GM12878 (cell line): ENCODE measurements at regions of chr3 and their contacts with region 1.

Region 1: DNA sequence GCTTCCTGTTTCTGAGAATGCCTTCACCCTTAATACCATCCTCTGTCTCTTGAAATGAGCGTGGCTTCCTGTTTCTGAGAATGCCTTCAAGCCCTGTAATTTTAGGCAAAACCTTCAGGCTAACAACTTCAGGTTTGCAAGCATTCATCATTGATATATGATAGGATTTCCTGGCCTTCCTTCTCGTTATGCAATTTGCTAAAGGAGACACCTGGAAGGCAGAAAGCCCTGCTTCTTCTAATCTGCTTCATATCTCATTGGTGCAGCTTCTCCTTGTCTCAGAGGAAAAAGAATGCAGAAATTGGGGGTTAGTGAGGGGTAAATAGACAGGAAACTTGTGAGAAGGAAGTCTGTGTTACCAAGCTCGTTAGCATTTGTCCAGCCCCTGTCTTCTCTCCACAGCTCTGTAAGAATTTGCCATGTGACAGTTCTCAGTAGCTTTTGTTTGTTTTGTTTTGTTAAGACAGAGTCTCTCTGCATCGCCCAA is 7.3 kb downstream of the ARL6IP5 start:
- DNase-seq: no peak
- ATAC-seq: peak; percentile 70
- H3K4me3 ChIP-seq: peak overlapping the region; percentile 59
- H3K27ac ChIP-seq: peak overlapping the region; percentile 39
- H3K4me1 ChIP-seq: peaks cover 54% of the 10 kb centered on the region
- H3K27me3 ChIP-seq: no peaks in the 10 kb centered on the region
- CTCF ChIP-seq: no peak
- EP300 ChIP-seq: no peak
- POLR2A ChIP-seq: no peak
- RAD21 ChIP-seq: no peak

Region 2: DNA sequence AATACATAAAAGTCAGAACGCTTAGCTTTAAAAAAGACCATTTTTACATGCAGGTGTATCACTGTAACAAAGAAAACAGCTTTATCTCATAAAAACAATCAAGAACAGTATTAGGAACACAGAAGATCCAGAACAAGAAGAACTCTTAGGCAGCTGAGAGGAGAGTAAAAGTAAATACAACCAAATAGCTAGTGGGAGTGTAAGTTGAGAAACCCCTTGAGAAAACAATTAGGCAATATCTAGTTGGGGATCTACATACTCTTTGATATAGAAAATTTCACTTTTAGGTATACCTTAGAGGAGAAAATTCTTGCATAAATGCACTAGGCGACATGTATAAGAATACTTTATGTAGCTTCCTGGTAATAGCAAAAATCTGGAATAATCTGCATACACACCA is 47.5 kb before region 1 on chr3:
- CTCF ChIA-PET with region 1: interaction called, 5 read pairs
- POLR2A ChIA-PET with region 1: interaction called, 22 read pairs
- RAD21 ChIA-PET with region 1: interaction called, 152 read pairs
- SMC1A ChIA-PET with region 1: interaction called, 234 read pairs
- in situ Hi-C with region 1: no loop called
- intact Hi-C with region 1: no loop called
- DNase-seq: no peak
- ATAC-seq: no peak
- H3K4me3 ChIP-seq: no peak overlapping the region
- H3K27ac ChIP-seq: no peak overlapping the region
- H3K4me1 ChIP-seq: no peaks in the 10 kb centered on the region
- H3K27me3 ChIP-seq: no peaks in the 10 kb centered on the region
- CTCF ChIP-seq: no peak
- EP300 ChIP-seq: no peak
- POLR2A ChIP-seq: no peak
- RAD21 ChIP-seq: no peak

Region 3: GRCh38 chr3:69058180-69058946 is 33.7 kb before region 1 on chr3:
- CTCF ChIA-PET with region 1: interaction called, 13 read pairs
- POLR2A ChIA-PET with region 1: interaction called, 30 read pairs
- RAD21 ChIA-PET with region 1: interaction called, 152 read pairs
- SMC1A ChIA-PET with region 1: interaction called, 234 read pairs
- in situ Hi-C with region 1: no loop called
- intact Hi-C with region 1: no loop called
- DNase-seq: no peak
- ATAC-seq: peak; percentile 99
- H3K4me3 ChIP-seq: peak overlapping the region; percentile 31; the same call in 1 of the 2 replicates
- H3K27ac ChIP-seq: peak overlapping the region; percentile 82
- H3K4me1 ChIP-seq: peaks cover 10% of the 10 kb centered on the region
- H3K27me3 ChIP-seq: no peaks in the 10 kb centered on the region
- CTCF ChIP-seq: no peak
- EP300 ChIP-seq: no peak
- POLR2A ChIP-seq: no peak
- RAD21 ChIP-seq: no peak

Region 4: GRCh38 chr3:69079269-69080159 is 12.6 kb before region 1 on chr3:
- CTCF ChIA-PET with region 1: interaction called, 7 read pairs
- POLR2A ChIA-PET with region 1: interaction called, 26 read pairs
- RAD21 ChIA-PET with region 1: interaction called, 78 read pairs
- SMC1A ChIA-PET with region 1: interaction called, 72 read pairs
- in situ Hi-C with region 1: no loop called
- intact Hi-C with region 1: no loop called
- DNase-seq: no peak
- ATAC-seq: peak; percentile 25
- H3K4me3 ChIP-seq: peak overlapping the region; percentile 89
- H3K27ac ChIP-seq: peak overlapping the region; percentile 51
- H3K4me1 ChIP-seq: peaks cover 31% of the 10 kb centered on the region
- H3K27me3 ChIP-seq: no peaks in the 10 kb centered on the region
- CTCF ChIP-seq: no peak
- EP300 ChIP-seq: no peak
- POLR2A ChIP-seq: no peak
- RAD21 ChIP-seq: no peak